PC-3 (cell line): ENCODE measurements at regions of chr3 and their contacts with region 1.

Region 1: GRCh38 chr3:160413613-160414248 is 14.3 kb downstream of the SMC4 start:
- DNase-seq: peak; percentile 83
- ATAC-seq: peak; percentile 80
- H3K4me3 ChIP-seq: no peak overlapping the region
- H3K27ac ChIP-seq: no peak overlapping the region
- H3K4me1 ChIP-seq: no peaks in the 10 kb centered on the region
- H3K27me3 ChIP-seq: no peaks in the 10 kb centered on the region
- CTCF ChIP-seq: peak; percentile 89

Region 2: DNA sequence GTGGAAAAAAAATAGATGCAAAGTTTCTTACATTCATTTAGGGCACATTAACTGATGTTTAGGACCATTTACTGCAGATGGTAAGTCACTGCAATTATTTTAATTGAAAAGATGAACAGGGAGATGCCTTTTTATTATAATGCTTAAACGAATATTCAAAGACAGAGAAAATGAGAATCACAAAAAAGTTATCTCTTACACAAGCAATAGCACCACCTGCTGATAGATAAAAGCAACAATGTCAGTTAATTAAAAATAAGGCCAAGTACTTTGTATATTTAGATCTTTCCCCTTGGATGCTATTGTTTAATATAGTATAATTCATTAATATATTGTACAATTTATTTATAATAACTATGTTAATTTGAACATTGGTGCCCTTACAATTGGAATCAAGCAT is 70.6 kb before region 1 on chr3:
- CTCF ChIA-PET with region 1: no interaction called
- POLR2A ChIA-PET with region 1: no interaction called
- intact Hi-C with region 1: loop called (anchors 2 kb)
- DNase-seq: peak; percentile 42
- ATAC-seq: no peak
- H3K4me3 ChIP-seq: no peak overlapping the region
- H3K27ac ChIP-seq: no peak overlapping the region
- H3K4me1 ChIP-seq: no peaks in the 10 kb centered on the region
- H3K27me3 ChIP-seq: no peaks in the 10 kb centered on the region
- CTCF ChIP-seq: peak; percentile 60

Region 3: GRCh38 chr3:160538895-160539294 is 125.2 kb after region 1 on chr3:
- CTCF ChIA-PET with region 1: no interaction called
- POLR2A ChIA-PET with region 1: no interaction called
- intact Hi-C with region 1: no loop called
- DNase-seq: no peak
- ATAC-seq: peak; percentile 24
- H3K4me3 ChIP-seq: no peak overlapping the region
- H3K27ac ChIP-seq: no peak overlapping the region
- H3K4me1 ChIP-seq: no peaks in the 10 kb centered on the region
- H3K27me3 ChIP-seq: no peaks in the 10 kb centered on the region
- CTCF ChIP-seq: no peak

Region 4: DNA sequence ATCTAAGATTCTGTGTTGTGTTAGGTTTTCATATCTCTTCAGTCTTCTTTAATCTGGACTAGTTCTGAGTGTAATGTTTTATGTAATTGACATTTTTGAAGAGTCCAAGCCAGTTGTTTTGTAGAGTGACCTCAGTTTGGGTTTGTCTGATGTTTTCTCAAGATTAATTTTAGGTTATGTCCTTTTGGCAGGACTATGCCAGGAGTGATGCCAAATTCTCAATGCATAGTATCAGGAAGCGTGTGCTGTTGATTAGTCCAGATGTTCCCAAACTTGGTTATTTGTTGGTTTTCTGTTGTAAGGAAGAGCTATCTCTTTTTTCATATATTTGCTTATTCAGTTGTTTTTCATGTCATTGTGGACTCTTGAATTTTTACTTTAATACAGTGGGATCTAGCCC is 840.0 kb after region 1 on chr3:
- CTCF ChIA-PET with region 1: no interaction called
- POLR2A ChIA-PET with region 1: no interaction called
- intact Hi-C with region 1: no loop called
- DNase-seq: no peak
- ATAC-seq: no peak
- H3K4me3 ChIP-seq: no peak overlapping the region
- H3K27ac ChIP-seq: no peak overlapping the region
- H3K4me1 ChIP-seq: no peaks in the 10 kb centered on the region
- H3K27me3 ChIP-seq: no peaks in the 10 kb centered on the region
- CTCF ChIP-seq: no peak